ENCODE measurements at regions of chr1 and their contacts with region 1.

Region 1: DNA sequence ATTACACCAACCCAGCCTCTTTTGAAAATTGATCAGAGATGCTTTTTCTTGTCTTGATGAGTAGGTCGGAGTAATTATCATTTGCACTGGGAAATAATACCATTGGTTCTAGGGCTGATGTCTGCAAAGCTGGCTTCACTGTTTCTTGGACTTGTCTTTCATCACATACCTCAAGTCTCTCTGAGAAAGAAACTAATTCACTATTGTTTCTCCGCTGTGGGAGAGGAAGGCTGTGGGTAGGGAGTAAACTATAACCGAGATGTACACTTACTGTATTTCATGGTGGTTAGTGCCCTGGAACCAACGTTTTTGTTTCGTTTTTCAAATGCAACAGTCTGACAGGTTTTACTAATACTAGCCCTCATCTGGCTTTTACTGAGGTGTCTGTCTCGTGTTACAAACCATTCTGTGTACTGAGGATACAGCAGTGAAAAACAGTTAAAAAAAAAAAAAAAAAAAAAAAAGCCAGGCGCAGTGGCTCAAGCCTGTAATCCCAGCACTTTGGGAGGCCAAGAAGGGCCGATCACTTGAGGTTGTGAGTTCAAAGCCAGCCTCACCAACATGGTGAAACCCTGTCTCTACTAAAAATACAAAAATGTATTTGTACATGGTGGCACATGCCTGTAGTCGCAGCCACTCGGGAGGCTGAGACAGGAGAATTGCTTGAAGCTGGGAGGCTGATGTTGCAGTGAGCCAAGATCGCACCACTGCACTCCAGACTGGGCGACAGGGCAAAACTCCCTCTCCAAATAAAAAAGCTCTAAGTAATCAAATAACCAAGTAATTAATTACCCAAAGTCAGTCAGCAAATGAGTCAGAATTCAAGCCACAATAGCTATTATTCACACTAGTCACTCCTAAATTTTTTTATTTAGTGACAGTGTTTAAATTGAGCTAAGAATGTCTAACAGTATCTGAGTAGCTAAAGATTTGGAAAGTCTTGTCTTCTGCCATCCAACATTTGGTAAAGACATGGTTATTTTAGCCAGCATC is 23.3 kb downstream of the TOMM20 start:
- DNase-seq: peak in 3 of 14 experiments; percentile 38 to 66 (median 47)
- ATAC-seq: no peak
- H3K4me3 ChIP-seq: peak overlapping the region; percentile 40
- H3K4me3 Mint-ChIP-seq: peak overlapping the region; percentile 85
- H3K27ac ChIP-seq: no peak overlapping the region
- H3K27ac Mint-ChIP-seq: peak overlapping the region; percentile 51
- H3K4me1 ChIP-seq: peaks cover 25% of the 10 kb centered on the region
- H3K4me1 Mint-ChIP-seq: peaks cover 41% of the 10 kb centered on the region
- H3K27me3 ChIP-seq: no peaks in the 10 kb centered on the region
- H3K27me3 Mint-ChIP-seq: no peaks in the 10 kb centered on the region
- CTCF ChIP-seq: no peak

Region 2: GRCh38 chr1:235093696-235094592 is 11.4 kb before region 1 on chr1:
- CTCF ChIA-PET with region 1: no interaction called
- POLR2A ChIA-PET with region 1: interaction called, 4 read pairs
- intact Hi-C with region 1: loop called in 1 of 2 experiments (anchors 1 kb)
- DNase-seq: peak; percentile 75 to 90 (median 82)
- ATAC-seq: peak; percentile 100
- H3K4me3 ChIP-seq: no peak overlapping the region
- H3K4me3 Mint-ChIP-seq: no peak overlapping the region
- H3K27ac ChIP-seq: no peak overlapping the region
- H3K27ac Mint-ChIP-seq: no peak overlapping the region
- H3K4me1 ChIP-seq: peaks cover 9% of the 10 kb centered on the region
- H3K4me1 Mint-ChIP-seq: peaks cover 6% of the 10 kb centered on the region
- H3K27me3 ChIP-seq: no peaks in the 10 kb centered on the region
- H3K27me3 Mint-ChIP-seq: peaks cover 6% of the 10 kb centered on the region
- CTCF ChIP-seq: peak; percentile 94

Region 3: GRCh38 chr1:235128456-235129328 is 23.3 kb after region 1 on chr1 and contains the start of gene TOMM20:
- CTCF ChIA-PET with region 1: interaction called, 8 read pairs
- POLR2A ChIA-PET with region 1: interaction called, 11 read pairs
- intact Hi-C with region 1: loop called in 1 of 2 experiments (anchors 2 kb)
- DNase-seq: peak; percentile 86 to 99 (median 92)
- ATAC-seq: peak; percentile 91
- H3K4me3 ChIP-seq: peak within 1 kb of the TSS; percentile 86
- H3K4me3 Mint-ChIP-seq: peak within 1 kb of the TSS; percentile 98
- H3K27ac ChIP-seq: peak within 1 kb of the TSS; percentile 89 to 93
- H3K27ac Mint-ChIP-seq: peak within 1 kb of the TSS; percentile 98
- H3K4me1 ChIP-seq: peaks cover 38% of the 10 kb centered on the region
- H3K4me1 Mint-ChIP-seq: peaks cover 45% of the 10 kb centered on the region
- H3K27me3 ChIP-seq: no peaks in the 10 kb centered on the region
- H3K27me3 Mint-ChIP-seq: no peaks in the 10 kb centered on the region
- CTCF ChIP-seq: no peak
- total RNA-seq, gene TOMM20: 129 to 133 TPM

Region 4: GRCh38 chr1:235239851-235240250 is 134.5 kb after region 1 on chr1:
- CTCF ChIA-PET with region 1: no interaction called
- POLR2A ChIA-PET with region 1: no interaction called
- intact Hi-C with region 1: no loop called
- DNase-seq: no peak
- ATAC-seq: no peak
- H3K4me3 ChIP-seq: no peak overlapping the region
- H3K4me3 Mint-ChIP-seq: no peak overlapping the region
- H3K27ac ChIP-seq: no peak overlapping the region
- H3K27ac Mint-ChIP-seq: peak overlapping the region; percentile 22
- H3K4me1 ChIP-seq: peaks cover 2% of the 10 kb centered on the region
- H3K4me1 Mint-ChIP-seq: peaks cover 51% of the 10 kb centered on the region
- H3K27me3 ChIP-seq: no peaks in the 10 kb centered on the region
- H3K27me3 Mint-ChIP-seq: no peaks in the 10 kb centered on the region
- CTCF ChIP-seq: no peak

Region 5: DNA sequence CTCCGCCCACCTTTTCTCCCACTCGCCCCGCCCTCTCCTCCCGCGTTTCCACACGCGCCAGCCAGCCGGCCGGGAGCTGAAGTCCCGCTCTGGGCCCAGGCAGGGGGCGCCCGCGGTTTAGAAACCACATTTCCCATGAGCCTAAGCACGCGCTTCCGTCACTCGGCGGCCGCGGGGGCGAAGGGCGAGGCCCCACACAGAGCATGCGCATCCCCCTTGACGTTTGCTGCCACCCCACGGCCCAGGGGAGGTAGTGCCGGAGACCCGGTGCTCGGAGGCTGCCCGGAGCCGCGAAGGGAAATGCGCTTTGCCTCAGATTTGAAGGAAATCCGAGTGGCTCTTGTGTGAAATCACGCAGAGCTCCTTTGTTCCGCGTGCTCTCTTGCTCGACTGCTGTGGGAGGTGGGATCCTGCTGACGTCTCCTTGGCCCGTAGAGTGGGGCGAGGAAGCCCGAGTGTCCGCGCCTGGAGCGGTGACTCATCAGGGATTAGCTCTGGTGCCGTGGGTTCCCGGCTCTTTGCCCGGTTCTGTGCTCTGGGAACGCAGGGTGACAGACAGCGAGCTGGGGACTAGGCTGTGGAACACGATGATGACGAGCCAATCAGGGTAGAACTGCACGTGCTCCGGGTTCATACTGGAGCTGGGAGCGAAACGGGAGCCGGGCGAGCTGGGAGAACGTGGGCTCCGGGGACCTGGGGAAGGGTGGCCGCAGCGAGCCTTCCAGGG is 399.3 kb after region 1 on chr1:
- CTCF ChIA-PET with region 1: no interaction called
- POLR2A ChIA-PET with region 1: interaction called, 4 read pairs
- intact Hi-C with region 1: loop called in 1 of 2 experiments (anchors 10 kb)
- DNase-seq: peak; percentile 96 to 100 (median 98)
- ATAC-seq: peak; percentile 86
- H3K4me3 ChIP-seq: peak overlapping the region; percentile 79
- H3K4me3 Mint-ChIP-seq: peak overlapping the region; percentile 92
- H3K27ac ChIP-seq: peak overlapping the region; percentile 89 to 93
- H3K27ac Mint-ChIP-seq: peak overlapping the region; percentile 96
- H3K4me1 ChIP-seq: peaks cover 15% of the 10 kb centered on the region
- H3K4me1 Mint-ChIP-seq: peaks cover 20% of the 10 kb centered on the region
- H3K27me3 ChIP-seq: no peaks in the 10 kb centered on the region
- H3K27me3 Mint-ChIP-seq: no peaks in the 10 kb centered on the region
- CTCF ChIP-seq: peak; percentile 91